ENCODE measurements at regions of chr11 and their contacts with region 1.

Region 1: DNA sequence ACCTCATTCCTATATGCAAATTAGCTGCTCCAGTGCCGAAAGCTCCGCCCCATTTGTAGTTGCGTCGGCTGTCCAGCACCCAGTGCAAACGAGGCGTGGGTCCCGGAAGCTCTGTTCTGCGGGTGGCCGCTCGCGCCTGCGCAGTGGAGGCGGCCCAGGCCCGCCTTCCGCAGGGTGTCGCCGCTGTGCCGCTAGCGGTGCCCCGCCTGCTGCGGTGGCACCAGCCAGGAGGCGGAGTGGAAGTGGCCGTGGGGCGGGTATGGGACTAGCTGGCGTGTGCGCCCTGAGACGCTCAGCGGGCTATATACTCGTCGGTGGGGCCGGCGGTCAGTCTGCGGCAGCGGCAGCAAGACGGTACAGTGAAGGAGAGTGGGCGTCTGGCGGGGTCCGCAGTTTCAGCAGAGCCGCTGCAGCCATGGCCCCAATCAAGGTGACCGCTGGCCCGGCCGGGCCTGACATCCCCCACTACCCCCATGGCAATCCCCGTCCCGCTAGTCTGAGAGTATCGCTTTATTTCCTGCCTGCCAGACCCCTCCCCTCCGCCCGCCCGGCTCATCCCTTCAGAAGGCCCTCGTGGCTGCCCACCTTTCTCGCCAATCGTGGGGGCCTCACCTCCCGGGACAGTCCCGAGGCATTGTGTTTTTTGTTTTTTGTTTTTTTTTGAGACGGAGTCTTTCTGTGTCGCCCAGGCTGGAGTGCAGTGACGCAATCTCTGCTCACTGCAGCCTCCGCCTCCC is at the start of gene PRDX5:
- DNase-seq: peak; percentile 96
- H3K4me3 Mint-ChIP-seq: peak within 1 kb of the TSS; percentile 86
- H3K27ac Mint-ChIP-seq: peak within 1 kb of the TSS; percentile 93
- H3K4me1 Mint-ChIP-seq: peaks cover 36% of the 10 kb centered on the region
- H3K27me3 Mint-ChIP-seq: no peaks in the 10 kb centered on the region
- CTCF ChIP-seq: no peak
- total RNA-seq, gene PRDX5: 274 and 302 TPM in 2 replicates

Region 2: DNA sequence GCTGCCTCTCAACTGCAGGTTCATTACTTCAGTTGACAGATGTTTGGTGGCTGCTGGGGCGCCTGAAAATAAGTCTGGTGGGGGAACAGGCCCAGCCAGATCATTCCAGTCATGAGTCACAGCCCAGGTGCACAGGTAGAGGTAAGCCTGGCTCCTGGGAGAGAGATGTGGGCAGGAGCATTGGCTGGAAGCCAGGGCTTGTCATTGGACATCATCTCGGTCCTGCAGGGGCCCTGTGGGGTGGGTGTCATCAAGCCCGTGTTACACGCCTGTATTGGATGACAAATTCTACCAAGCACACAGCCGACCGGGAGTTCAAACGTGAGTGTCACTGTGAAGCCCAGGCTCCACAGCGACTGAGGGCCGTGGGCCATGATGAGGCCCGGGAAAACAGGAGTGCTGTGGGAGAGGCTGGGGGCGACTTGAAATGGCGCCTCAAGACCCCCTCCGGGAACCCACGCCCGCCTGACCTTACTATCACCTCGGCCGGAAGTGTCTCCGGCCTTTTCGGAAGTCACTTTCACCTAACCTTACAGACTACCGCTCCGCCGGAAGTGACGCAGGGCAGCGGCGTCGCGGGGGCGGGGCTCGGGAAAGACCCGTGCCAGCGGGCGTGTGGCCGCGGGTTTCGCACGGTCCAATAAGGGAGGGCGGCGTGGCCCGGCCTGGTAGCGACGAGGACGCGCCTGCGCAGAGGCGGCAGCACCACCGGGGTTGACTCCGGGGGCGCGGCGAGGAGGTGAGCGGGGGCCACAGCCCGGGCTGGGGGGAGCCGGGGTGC is 77.5 kb before region 1 on chr11 and contains the start of gene FKBP2:
- CTCF ChIA-PET with region 1: interaction called, 3 read pairs
- POLR2A ChIA-PET with region 1: interaction called, 23 read pairs
- intact Hi-C with region 1: no loop called
- DNase-seq: peak; percentile 96
- H3K4me3 Mint-ChIP-seq: peak within 1 kb of the TSS; percentile 93
- H3K27ac Mint-ChIP-seq: peak within 1 kb of the TSS; percentile 98
- H3K4me1 Mint-ChIP-seq: peaks cover 19% of the 10 kb centered on the region
- H3K27me3 Mint-ChIP-seq: no peaks in the 10 kb centered on the region
- CTCF ChIP-seq: no peak
- total RNA-seq, gene FKBP2: 84.7 and 86.0 TPM in 2 replicates

Region 3: GRCh38 chr11:64284048-64284961 is 33.8 kb before region 1 on chr11 and contains the start of gene BAD:
- CTCF ChIA-PET with region 1: no interaction called
- POLR2A ChIA-PET with region 1: interaction called, 11 read pairs
- intact Hi-C with region 1: no loop called
- DNase-seq: peak; percentile 94
- H3K4me3 Mint-ChIP-seq: peak within 1 kb of the TSS; percentile 76
- H3K27ac Mint-ChIP-seq: peak within 1 kb of the TSS; percentile 84
- H3K4me1 Mint-ChIP-seq: peaks cover 10% of the 10 kb centered on the region
- H3K27me3 Mint-ChIP-seq: no peaks in the 10 kb centered on the region
- CTCF ChIP-seq: no peak
- total RNA-seq, gene BAD: 67.4 and 79.7 TPM in 2 replicates

Region 4: GRCh38 chr11:64341851-64342791 is 24.0 kb after region 1 on chr11:
- CTCF ChIA-PET with region 1: interaction called, 12 read pairs
- POLR2A ChIA-PET with region 1: interaction called, 285 read pairs
- intact Hi-C with region 1: no loop called
- DNase-seq: peak; percentile 90
- H3K4me3 Mint-ChIP-seq: peak overlapping the region; percentile 65
- H3K27ac Mint-ChIP-seq: peak overlapping the region; percentile 35
- H3K4me1 Mint-ChIP-seq: peaks cover 12% of the 10 kb centered on the region
- H3K27me3 Mint-ChIP-seq: no peaks in the 10 kb centered on the region
- CTCF ChIP-seq: peak; percentile 36

Region 5: GRCh38 chr11:64358907-64359711 is 41.0 kb after region 1 on chr11 and contains the start of gene RPS6KA4:
- CTCF ChIA-PET with region 1: interaction called, 148 read pairs
- POLR2A ChIA-PET with region 1: interaction called, 65 read pairs
- intact Hi-C with region 1: loop called (anchors 1 kb)
- DNase-seq: peak; percentile 58
- H3K4me3 Mint-ChIP-seq: peak within 1 kb of the TSS; percentile 82
- H3K27ac Mint-ChIP-seq: peak within 1 kb of the TSS; percentile 8
- H3K4me1 Mint-ChIP-seq: peaks cover 35% of the 10 kb centered on the region
- H3K27me3 Mint-ChIP-seq: no peaks in the 10 kb centered on the region
- CTCF ChIP-seq: no peak
- total RNA-seq, gene RPS6KA4: 42.5 and 46.5 TPM in 2 replicates

Measured in MCF 10A (cell line).